Caco-2 (cell line): ENCODE measurements at regions of chr16 and their contacts with region 1.

Region 1: DNA sequence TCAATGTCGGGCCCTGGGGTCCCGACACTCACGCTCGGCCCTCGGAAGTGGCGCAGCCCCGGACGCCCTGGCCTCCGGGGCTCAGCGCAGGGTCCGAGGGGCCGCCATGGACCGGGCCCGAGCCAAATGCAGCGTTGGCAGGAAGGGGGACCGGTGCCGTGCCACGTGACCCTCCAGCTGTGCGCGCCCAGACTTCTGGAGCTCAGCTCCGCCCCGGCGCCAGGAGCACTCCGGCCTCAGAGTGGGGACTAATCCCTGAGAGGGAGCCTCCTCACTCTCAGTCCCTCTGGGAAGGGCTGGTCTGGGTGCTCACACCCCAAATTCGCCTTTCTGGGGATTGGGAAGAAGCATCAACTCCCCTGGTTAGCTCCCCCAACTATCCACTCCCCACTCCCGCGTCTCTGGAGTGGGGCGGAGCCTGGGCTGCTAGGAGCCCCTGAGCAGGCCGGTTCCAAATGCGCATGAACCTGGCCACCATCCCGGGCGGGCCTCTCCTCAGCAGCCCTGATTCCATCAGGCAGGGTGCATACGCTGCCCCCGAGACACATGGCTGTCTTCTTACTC is at the start of gene B3GNT9:
- DNase-seq: peak; percentile 69 to 76
- H3K4me3 ChIP-seq: peak within 1 kb of the TSS; percentile 75
- H3K4me3 Mint-ChIP-seq: peak within 1 kb of the TSS; percentile 81
- H3K27ac Mint-ChIP-seq: peak within 1 kb of the TSS; percentile 85
- H3K4me1 ChIP-seq: peaks cover 4% of the 10 kb centered on the region
- H3K4me1 Mint-ChIP-seq: no peaks in the 10 kb centered on the region
- H3K27me3 ChIP-seq: no peaks in the 10 kb centered on the region
- H3K27me3 Mint-ChIP-seq: no peaks in the 10 kb centered on the region
- CTCF ChIP-seq: no peak
- total RNA-seq, gene B3GNT9: 11.6 and 11.7 TPM in 2 replicates

Region 2: DNA sequence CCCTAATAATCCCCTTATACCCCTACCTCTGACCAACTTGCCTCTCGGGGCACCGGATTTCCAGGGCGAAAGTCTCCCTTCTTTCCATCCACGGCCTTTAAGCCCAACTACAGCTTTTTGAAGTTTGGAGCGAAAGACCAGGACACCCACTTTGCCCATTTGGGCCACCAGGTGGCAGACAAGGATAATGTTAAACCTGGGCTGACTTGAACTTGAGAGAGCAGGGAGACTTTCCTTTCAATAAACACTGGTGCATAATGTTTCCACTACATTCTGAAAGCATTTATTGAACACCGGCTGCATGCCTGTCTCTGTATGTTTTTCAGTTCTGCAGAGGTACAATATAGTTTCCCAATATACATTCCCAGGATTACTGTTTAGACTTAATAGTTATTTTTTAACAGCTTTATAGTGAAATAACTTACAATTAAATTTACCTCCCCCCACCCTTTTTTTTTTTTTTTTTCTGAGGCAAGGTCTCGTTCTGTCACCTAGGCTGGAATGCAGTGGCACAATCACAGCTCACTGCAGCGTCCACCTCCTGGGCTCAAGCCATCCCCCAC is 196.7 kb before region 1 on chr16:
- CTCF ChIA-PET with region 1: interaction called, 6 read pairs
- POLR2A ChIA-PET with region 1: no interaction called
- intact Hi-C with region 1: loop called (anchors 2 kb)
- DNase-seq: peak; percentile 81 to 88
- H3K4me3 ChIP-seq: no peak overlapping the region
- H3K4me3 Mint-ChIP-seq: peak overlapping the region; percentile 50
- H3K27ac Mint-ChIP-seq: peak overlapping the region; percentile 72
- H3K4me1 ChIP-seq: peaks cover 17% of the 10 kb centered on the region
- H3K4me1 Mint-ChIP-seq: peaks cover 15% of the 10 kb centered on the region
- H3K27me3 ChIP-seq: no peaks in the 10 kb centered on the region
- H3K27me3 Mint-ChIP-seq: no peaks in the 10 kb centered on the region
- CTCF ChIP-seq: peak; percentile 88 to 90

Region 3: DNA sequence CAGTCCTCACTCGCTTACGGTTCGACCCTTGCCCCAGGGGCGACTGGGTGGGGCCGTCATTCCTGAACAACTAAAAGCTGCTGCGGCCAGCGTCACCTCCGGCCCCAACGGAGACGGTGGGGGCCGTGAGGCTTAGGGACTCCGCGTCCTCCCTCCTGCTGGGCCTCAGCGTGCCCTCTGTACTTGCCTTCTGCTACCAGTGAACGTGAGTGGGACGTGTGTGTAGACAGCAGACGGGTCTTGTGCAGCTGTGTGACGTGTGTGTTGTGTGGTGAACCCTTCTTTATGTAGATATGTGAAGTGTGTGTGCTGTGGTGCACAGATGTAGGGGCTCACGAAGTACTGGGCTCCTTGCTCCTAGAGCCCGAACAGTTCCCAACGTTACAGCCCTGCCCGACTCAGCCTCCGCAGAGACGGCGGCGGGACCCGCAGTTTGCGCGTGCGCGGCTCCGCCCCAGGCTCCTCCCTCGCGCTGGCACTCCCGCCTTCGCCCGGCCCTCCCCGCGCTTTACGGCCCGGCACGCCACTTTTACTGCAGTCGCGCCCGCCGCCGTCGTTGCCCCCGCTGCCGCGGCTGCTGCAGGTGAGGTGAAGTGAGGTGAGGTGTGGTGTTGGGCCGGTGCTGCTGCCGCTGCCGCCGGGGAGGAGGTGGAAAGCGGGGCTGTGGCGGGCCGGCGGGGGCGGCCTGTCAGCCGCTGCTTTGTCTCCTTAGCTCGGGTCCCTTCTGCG is 41.3 kb before region 1 on chr16 and contains the start of gene PHAF1:
- CTCF ChIA-PET with region 1: interaction called, 8 read pairs
- POLR2A ChIA-PET with region 1: no interaction called
- intact Hi-C with region 1: loop called (anchors 2 kb)
- DNase-seq: peak; percentile 96 to 99
- H3K4me3 ChIP-seq: peak within 1 kb of the TSS; percentile 67
- H3K4me3 Mint-ChIP-seq: peak within 1 kb of the TSS; percentile 97
- H3K27ac Mint-ChIP-seq: peak within 1 kb of the TSS; percentile 93
- H3K4me1 ChIP-seq: peaks cover 42% of the 10 kb centered on the region
- H3K4me1 Mint-ChIP-seq: peaks cover 26% of the 10 kb centered on the region
- H3K27me3 ChIP-seq: no peaks in the 10 kb centered on the region
- H3K27me3 Mint-ChIP-seq: no peaks in the 10 kb centered on the region
- CTCF ChIP-seq: no peak
- total RNA-seq, gene PHAF1: 34.4 and 38.5 TPM in 2 replicates

Region 4: DNA sequence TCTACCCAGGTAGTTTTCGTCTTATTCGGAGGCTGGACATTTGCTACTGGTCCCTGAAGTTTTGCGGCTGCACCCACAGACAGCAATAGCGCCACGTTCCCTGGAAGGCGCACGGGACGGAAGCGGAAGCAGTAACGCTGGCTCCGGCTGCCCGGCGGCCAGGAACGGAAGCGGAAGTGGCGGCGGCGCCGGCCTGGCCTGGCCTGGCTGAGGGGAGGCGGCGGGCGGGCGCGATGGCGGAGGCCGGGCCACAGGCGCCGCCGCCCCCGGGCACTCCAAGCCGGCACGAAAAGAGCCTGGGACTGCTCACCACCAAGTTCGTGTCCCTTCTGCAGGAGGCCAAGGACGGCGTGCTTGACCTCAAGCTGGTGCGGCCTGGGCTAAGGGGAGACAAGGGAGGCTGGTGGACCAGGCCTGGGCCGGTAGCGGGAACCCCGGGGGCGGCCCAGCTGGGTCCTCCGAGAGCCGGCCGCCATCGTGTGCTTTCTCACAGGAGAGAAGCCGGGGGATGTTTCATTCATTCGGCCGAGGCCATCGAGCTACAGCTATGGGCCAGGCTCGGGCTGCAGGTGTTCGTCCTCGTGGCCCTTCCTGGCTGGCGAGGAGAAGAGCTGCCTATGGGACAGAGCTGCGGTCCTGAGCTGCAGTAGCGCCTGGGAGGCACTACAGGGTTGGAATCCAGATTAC is 41.2 kb after region 1 on chr16 and contains the start of gene E2F4:
- CTCF ChIA-PET with region 1: no interaction called
- POLR2A ChIA-PET with region 1: no interaction called
- intact Hi-C with region 1: no loop called
- DNase-seq: peak; percentile 92 to 94
- H3K4me3 ChIP-seq: peak within 1 kb of the TSS; percentile 90
- H3K4me3 Mint-ChIP-seq: peak within 1 kb of the TSS; percentile 77
- H3K27ac Mint-ChIP-seq: peak within 1 kb of the TSS; percentile 54
- H3K4me1 ChIP-seq: peaks cover 20% of the 10 kb centered on the region
- H3K4me1 Mint-ChIP-seq: peaks cover 24% of the 10 kb centered on the region
- H3K27me3 ChIP-seq: no peaks in the 10 kb centered on the region
- H3K27me3 Mint-ChIP-seq: no peaks in the 10 kb centered on the region
- CTCF ChIP-seq: no peak
- total RNA-seq, gene E2F4: 113 and 115 TPM in 2 replicates

Region 5: DNA sequence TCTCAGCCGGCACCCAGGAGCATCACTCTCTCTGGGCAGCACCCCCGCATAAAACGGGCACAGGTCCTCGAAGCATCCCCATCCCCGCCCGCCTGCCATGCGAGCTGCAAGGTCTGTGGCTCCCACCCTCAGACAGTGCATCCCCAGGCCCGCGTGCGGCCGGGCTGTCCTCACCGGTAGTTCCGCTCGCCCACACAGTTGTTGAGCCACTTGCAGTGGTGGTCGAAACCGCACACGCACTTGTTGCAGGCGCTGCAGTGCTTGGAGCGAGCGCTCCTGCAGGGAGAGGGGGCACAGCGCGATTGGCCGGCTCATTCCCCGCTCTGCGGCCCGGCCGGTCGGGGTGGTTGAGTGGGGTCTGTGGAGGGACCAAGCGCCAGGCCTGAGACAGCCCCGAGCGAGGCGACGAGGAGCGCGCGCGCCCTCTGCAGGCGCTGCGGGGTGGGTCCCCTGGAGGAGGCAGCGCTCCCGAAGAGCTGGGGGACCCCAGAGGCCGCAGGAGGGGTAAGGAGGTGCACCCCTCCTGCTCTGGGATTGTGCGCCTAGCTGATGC is 248.3 kb after region 1 on chr16:
- CTCF ChIA-PET with region 1: no interaction called
- POLR2A ChIA-PET with region 1: no interaction called
- intact Hi-C with region 1: no loop called
- DNase-seq: no peak
- H3K4me3 ChIP-seq: no peak overlapping the region
- H3K4me3 Mint-ChIP-seq: no peak overlapping the region
- H3K27ac Mint-ChIP-seq: no peak overlapping the region
- H3K4me1 ChIP-seq: peaks cover 28% of the 10 kb centered on the region
- H3K4me1 Mint-ChIP-seq: peaks cover 24% of the 10 kb centered on the region
- H3K27me3 ChIP-seq: no peaks in the 10 kb centered on the region
- H3K27me3 Mint-ChIP-seq: no peaks in the 10 kb centered on the region
- CTCF ChIP-seq: peak; percentile 8 to 19